Activated CD8-positive, alpha-beta T cell treated with anti-CD3 and anti-CD28 coated beads, Interleukin-2, amount 10 ng/mL, durations not matched to agents 7 days and 5 days (primary cell): ENCODE measurements at regions of chr12 and their contacts with region 1.

Region 1: DNA sequence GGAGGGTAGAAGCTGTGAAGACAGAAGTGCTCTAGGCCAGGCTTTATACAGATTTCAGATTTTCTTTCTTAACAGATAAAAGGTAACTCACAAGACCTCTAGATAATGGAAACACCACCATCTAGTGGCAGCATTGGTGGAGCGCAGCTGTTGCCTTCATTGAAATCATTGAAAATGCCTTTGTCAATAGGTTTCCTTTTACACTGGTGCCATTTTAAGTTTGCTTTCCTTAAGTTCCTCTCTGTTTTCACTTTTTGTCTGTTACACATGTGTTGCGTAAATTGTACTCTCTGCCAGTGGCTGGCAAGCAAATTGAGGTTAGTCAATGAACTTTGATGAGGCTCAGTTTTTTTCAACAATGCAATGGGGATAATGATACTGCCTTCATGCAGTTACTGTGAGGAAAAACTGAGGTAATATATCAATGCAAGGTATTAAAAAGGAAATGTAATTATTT is 31.1 kb downstream of the ALDH1L2 start:
- DNase-seq: peak; percentile 84
- ATAC-seq: peak; percentile 79
- H3K4me3 Mint-ChIP-seq: no peak overlapping the region
- H3K27ac Mint-ChIP-seq: no peak overlapping the region
- H3K4me1 Mint-ChIP-seq: peaks cover 2% of the 10 kb centered on the region
- H3K27me3 Mint-ChIP-seq: peaks cover 7% of the 10 kb centered on the region

Region 2: DNA sequence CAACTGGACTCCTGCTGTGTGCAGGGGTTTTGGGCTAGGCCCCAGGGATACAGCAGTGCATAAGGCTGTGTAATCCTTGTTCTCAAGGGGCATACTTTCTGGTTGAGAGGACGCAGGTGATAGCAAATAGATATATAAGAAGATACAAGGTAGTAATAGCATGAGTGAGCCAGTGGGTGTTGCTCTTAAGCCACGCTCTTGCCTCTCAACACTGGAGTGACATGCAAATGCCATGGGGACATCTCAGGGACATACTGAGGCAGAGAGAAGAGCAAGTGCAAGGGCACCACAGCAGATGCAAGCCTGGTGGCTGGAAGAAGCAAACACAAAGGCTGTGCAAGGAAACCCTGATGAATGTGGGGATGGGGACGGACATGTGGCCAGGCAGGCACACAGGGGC is 373.1 kb before region 1 on chr12:
- CTCF ChIA-PET with region 1: interaction called, 11 read pairs
- POLR2A ChIA-PET with region 1: no interaction called
- DNase-seq: peak; percentile 67
- ATAC-seq: peak; percentile 18
- H3K4me3 Mint-ChIP-seq: no peak overlapping the region
- H3K27ac Mint-ChIP-seq: peak overlapping the region; percentile 69
- H3K4me1 Mint-ChIP-seq: peaks cover 72% of the 10 kb centered on the region
- H3K27me3 Mint-ChIP-seq: no peaks in the 10 kb centered on the region

Region 3: DNA sequence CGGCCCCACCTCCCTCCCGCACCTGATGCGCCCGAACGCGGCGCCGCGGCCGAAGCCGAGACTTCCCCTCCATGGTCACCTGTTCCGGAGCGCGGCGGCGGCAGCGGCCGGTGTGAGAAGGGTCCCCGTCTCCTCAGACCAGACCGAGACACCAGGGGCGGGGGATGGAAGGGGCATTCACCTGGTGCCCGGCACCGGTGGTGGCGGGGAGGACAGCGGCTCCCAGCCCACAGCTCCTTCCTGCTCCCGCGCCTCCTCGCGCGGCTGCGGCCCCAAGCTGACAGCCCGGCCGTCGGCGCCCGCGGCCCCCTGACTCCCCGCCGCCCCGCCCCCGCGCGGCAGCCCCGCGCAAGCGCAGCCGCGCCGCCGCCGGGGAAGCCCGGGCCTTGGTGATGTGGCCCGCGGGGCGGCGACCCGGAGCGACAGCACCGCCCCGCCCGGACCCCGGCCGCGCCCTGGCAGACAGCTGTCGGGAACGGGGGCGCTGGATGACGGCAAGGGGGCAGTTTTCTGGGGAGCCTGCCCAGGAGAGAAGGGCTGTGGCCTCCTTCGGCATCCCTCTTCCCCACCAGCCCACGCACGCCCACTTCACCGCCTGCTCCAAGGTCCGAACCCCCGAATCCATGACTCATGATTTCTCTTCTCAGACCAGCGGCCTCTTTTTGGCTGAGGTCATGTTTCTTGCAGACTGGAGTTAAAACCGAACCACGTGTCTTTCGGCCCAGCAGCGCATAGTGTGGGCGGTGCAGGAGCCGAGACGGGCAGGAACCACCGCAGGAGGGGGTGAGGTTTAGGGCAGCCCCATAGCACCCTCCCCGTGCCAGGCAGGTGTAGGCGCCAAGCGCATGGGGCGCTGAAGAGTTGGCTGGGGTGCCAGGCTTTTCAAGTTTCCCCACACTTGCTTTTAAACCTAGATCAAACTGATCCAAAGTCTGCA is 94.9 kb before region 1 on chr12 and contains the start of gene SLC41A2:
- CTCF ChIA-PET with region 1: interaction called, 20 read pairs
- POLR2A ChIA-PET with region 1: no interaction called
- DNase-seq: peak; percentile 74
- ATAC-seq: peak; percentile 90
- H3K4me3 Mint-ChIP-seq: peak within 1 kb of the TSS; percentile 88
- H3K27ac Mint-ChIP-seq: peak within 1 kb of the TSS; percentile 75
- H3K4me1 Mint-ChIP-seq: peaks cover 19% of the 10 kb centered on the region
- H3K27me3 Mint-ChIP-seq: peaks cover 50% of the 10 kb centered on the region
- total RNA-seq, gene SLC41A2: 2.0 to 2.9 TPM

Region 4: GRCh38 chr12:104975621-104976343 is 77.4 kb before region 1 on chr12:
- CTCF ChIA-PET with region 1: no interaction called
- POLR2A ChIA-PET with region 1: no interaction called
- DNase-seq: no peak
- ATAC-seq: no peak
- H3K4me3 Mint-ChIP-seq: no peak overlapping the region
- H3K27ac Mint-ChIP-seq: no peak overlapping the region
- H3K4me1 Mint-ChIP-seq: no peaks in the 10 kb centered on the region
- H3K27me3 Mint-ChIP-seq: peaks cover 4% of the 10 kb centered on the region

Region 5: GRCh38 chr12:105036937-105037649 is 16.1 kb before region 1 on chr12:
- CTCF ChIA-PET with region 1: interaction called, 22 read pairs
- POLR2A ChIA-PET with region 1: interaction called, 4 read pairs
- DNase-seq: no peak
- ATAC-seq: peak; percentile 23
- H3K4me3 Mint-ChIP-seq: no peak overlapping the region
- H3K27ac Mint-ChIP-seq: peak overlapping the region; percentile 81
- H3K4me1 Mint-ChIP-seq: peaks cover 36% of the 10 kb centered on the region
- H3K27me3 Mint-ChIP-seq: no peaks in the 10 kb centered on the region